ENCODE measurements at regions of chr3 and their contacts with region 1.

Region 1: GRCh38 chr3:154779571-154779970 is 300.5 kb upstream of the MME start:
- DNase-seq: peak; percentile 56
- H3K4me3 ChIP-seq: no peak overlapping the region
- H3K27ac ChIP-seq: no peak overlapping the region
- H3K27me3 ChIP-seq: no peaks in the 10 kb centered on the region
- CTCF ChIP-seq: no peak

Region 2: DNA sequence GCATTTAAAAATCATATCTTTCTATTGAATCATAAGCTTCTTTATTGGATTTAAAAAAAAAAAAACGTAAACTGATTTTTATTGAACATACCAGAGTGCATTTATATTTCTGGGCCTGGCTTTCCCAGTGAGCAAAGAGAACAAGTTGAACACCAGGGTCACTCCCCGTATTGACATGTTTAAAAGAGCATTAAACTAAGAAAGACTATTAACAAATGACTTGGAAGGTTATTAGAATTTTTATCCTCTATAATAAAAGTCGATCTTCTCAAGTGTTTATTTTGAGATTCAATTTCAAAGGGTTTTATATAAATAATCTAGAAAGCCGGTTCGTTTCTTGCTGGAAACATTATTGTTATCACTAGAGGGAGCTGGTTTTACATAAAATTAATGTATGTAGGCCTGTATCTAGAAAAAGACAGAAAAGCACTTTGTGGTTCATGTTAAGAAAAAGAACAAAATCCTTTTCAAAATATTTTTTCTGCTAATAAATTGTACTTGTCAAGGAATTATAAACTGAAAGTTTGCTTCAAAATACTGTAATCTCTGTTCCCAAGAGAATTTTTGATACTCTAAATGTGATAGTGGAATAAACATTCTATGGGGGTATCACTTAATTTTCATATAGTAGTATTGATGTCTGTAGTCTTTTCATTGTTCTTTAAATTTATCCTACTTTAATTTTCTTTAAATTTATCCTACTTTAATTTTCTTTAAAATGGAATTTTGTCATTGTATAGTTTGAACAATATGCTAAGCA is 21.3 kb before region 1 on chr3:
- CTCF ChIA-PET with region 1: interaction called, 10 read pairs
- POLR2A ChIA-PET with region 1: no interaction called
- DNase-seq: no peak
- H3K4me3 ChIP-seq: no peak overlapping the region
- H3K27ac ChIP-seq: no peak overlapping the region
- H3K27me3 ChIP-seq: no peaks in the 10 kb centered on the region
- CTCF ChIP-seq: peak; percentile 63

Measured in AG04450 (cell line).